ENCODE measurements at regions of chrX and their contacts with region 1.

Region 1: GRCh38 chrX:118345401-118346257 is at the start of gene WDR44:
- DNase-seq: peak; percentile 94
- H3K4me3 ChIP-seq: peak within 1 kb of the TSS; percentile 93
- H3K27ac ChIP-seq: peak within 1 kb of the TSS; percentile 79
- H3K4me1 ChIP-seq: peaks cover 26% of the 10 kb centered on the region
- CTCF ChIP-seq: no peak
- total RNA-seq, gene WDR44: 9.3 and 9.4 TPM in 2 replicates

Region 2: GRCh38 chrX:118212817-118213183 is 132.8 kb before region 1 on chrX:
- CTCF ChIA-PET with region 1: no interaction called
- POLR2A ChIA-PET with region 1: no interaction called
- intact Hi-C with region 1: loop called (anchors 5 kb)
- DNase-seq: peak; percentile 50
- H3K4me3 ChIP-seq: peak overlapping the region; percentile 53
- H3K27ac ChIP-seq: peak overlapping the region; percentile 65
- H3K4me1 ChIP-seq: peaks cover 29% of the 10 kb centered on the region
- CTCF ChIP-seq: no peak

Measured in OCI-LY7 (cell line).